A673 (cell line): ENCODE measurements at regions of chrX and their contacts with region 1.

Region 1: GRCh38 chrX:70096052-70096451 is 33.8 kb downstream of the OTUD6A start:
- DNase-seq: no peak
- H3K4me3 ChIP-seq: no peak overlapping the region
- H3K27ac ChIP-seq: no peak overlapping the region
- H3K4me1 ChIP-seq: no peaks in the 10 kb centered on the region
- H3K27me3 ChIP-seq: no peaks in the 10 kb centered on the region
- CTCF ChIP-seq: peak; percentile 20; the same call in 1 of the 2 replicates

Region 2: DNA sequence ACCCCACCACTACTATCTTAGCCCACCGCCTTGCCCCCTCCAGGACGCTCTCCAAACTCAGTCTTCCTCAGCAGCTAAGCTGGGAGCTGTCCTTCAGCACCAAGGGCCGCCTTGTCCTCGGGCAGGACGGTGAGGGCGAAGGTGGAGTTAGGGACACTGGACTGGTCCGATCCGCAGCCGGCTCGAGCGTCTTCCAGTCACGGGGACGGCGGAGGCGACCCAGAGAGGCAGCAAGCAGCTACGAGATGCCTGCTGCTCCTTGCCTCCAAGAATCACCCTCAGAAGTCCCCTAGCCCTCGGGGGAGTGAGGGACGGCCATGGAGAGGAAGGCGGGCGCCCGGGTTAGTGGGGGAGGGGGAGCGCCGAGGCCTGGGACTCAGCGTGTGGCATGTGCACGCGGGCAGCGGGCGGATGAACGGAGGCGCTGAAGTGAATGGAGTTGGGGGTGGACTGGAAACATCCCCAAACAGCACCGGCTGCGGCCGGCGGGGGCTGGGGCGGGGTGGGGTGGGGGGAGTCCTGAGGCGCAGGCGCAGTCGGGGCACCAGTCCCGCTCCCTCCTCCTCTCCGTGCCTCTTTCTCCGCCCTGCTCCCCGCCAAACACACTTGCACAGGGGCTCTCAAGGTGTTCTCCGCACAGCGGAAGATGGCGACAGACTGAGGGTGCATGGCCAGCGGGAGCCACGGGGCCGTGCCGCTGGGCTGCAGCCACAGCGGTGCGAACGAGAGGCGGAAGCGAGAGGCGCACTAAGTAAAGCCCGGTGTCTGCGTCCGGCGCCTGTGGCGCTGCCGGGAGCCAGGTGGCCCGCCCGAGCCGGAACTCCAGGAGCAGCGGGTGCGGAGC is 592.0 kb before region 1 on chrX and contains the start of gene NALF2:
- CTCF ChIA-PET with region 1: no interaction called
- POLR2A ChIA-PET with region 1: no interaction called
- intact Hi-C with region 1: loop called (anchors 10 kb)
- DNase-seq: peak; percentile 43
- H3K4me3 ChIP-seq: peak within 1 kb of the TSS; percentile 49
- H3K27ac ChIP-seq: no peak within 1 kb of the TSS
- H3K4me1 ChIP-seq: no peaks in the 10 kb centered on the region
- H3K27me3 ChIP-seq: no peaks in the 10 kb centered on the region
- CTCF ChIP-seq: no peak
- total RNA-seq, gene NALF2: 2.0 and 2.3 TPM in 2 replicates

Region 3: GRCh38 chrX:69538321-69538876 is 557.7 kb before region 1 on chrX:
- CTCF ChIA-PET with region 1: no interaction called
- POLR2A ChIA-PET with region 1: no interaction called
- intact Hi-C with region 1: loop called (anchors 2 kb)
- DNase-seq: peak; percentile 68
- H3K4me3 ChIP-seq: peak overlapping the region; percentile 28
- H3K27ac ChIP-seq: no peak overlapping the region
- H3K4me1 ChIP-seq: no peaks in the 10 kb centered on the region
- H3K27me3 ChIP-seq: no peaks in the 10 kb centered on the region
- CTCF ChIP-seq: peak; percentile 84

Region 4: GRCh38 chrX:70336767-70337166 is 240.7 kb after region 1 on chrX:
- CTCF ChIA-PET with region 1: no interaction called
- POLR2A ChIA-PET with region 1: no interaction called
- intact Hi-C with region 1: no loop called
- DNase-seq: no peak
- H3K4me3 ChIP-seq: no peak overlapping the region
- H3K27ac ChIP-seq: no peak overlapping the region
- H3K4me1 ChIP-seq: no peaks in the 10 kb centered on the region
- H3K27me3 ChIP-seq: no peaks in the 10 kb centered on the region
- CTCF ChIP-seq: no peak